ENCODE measurements at regions of chr3 and their contacts with region 1.

Region 1: DNA sequence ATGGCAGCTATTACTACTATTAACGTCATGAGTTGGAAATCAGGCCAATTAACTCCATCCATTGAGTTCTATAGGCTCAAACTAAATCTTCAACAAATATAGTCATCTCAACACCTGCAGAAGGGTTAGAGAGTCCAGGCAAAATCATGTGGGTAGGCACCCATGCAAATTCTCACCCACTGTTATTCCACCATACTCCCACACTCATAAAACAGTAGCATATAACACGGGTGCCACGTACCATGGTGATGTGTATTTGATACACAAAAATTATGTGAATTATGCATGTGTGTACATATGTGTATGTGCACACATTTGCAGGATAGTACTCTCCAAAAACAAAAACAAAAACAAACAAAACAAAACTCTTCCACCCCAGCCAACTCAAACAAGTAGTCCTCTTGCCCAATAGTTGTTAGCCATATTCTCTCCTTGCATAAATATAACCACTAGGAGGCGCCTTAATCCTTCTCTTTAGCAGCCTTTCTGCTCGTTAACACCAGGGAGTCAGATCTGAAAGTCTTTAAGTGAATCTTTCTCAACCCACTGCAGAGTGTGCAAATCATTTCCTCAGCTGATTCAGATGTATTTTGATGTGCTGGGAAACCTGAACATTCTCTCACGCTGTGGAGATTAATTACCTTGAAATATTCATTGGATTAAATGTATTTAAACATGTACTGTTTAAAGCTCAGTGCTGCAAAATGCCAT is 38.0 kb upstream of the COPB2 start:
- H3K4me3 Mint-ChIP-seq: no peak overlapping the region
- H3K27ac Mint-ChIP-seq: no peak overlapping the region
- H3K4me1 Mint-ChIP-seq: peaks cover 13% of the 10 kb centered on the region
- H3K27me3 Mint-ChIP-seq: no peaks in the 10 kb centered on the region

Region 2: GRCh38 chr3:139519998-139520737 is 92.7 kb after region 1 on chr3:
- intact Hi-C with region 1: loop called (anchors 2 kb)
- H3K4me3 Mint-ChIP-seq: no peak overlapping the region
- H3K27ac Mint-ChIP-seq: peak overlapping the region; percentile 81
- H3K4me1 Mint-ChIP-seq: peaks cover 27% of the 10 kb centered on the region
- H3K27me3 Mint-ChIP-seq: peaks cover 1% of the 10 kb centered on the region

Region 3: GRCh38 chr3:139561959-139562676 is 134.7 kb after region 1 on chr3:
- intact Hi-C with region 1: loop called (anchors 2 kb)
- H3K4me3 Mint-ChIP-seq: no peak overlapping the region
- H3K27ac Mint-ChIP-seq: no peak overlapping the region
- H3K4me1 Mint-ChIP-seq: peaks cover 11% of the 10 kb centered on the region
- H3K27me3 Mint-ChIP-seq: no peaks in the 10 kb centered on the region

Region 4: GRCh38 chr3:139629033-139629432 is 201.6 kb after region 1 on chr3:
- intact Hi-C with region 1: loop called (anchors 2 kb)
- H3K4me3 Mint-ChIP-seq: no peak overlapping the region
- H3K27ac Mint-ChIP-seq: no peak overlapping the region
- H3K4me1 Mint-ChIP-seq: peaks cover 7% of the 10 kb centered on the region
- H3K27me3 Mint-ChIP-seq: no peaks in the 10 kb centered on the region

Region 5: DNA sequence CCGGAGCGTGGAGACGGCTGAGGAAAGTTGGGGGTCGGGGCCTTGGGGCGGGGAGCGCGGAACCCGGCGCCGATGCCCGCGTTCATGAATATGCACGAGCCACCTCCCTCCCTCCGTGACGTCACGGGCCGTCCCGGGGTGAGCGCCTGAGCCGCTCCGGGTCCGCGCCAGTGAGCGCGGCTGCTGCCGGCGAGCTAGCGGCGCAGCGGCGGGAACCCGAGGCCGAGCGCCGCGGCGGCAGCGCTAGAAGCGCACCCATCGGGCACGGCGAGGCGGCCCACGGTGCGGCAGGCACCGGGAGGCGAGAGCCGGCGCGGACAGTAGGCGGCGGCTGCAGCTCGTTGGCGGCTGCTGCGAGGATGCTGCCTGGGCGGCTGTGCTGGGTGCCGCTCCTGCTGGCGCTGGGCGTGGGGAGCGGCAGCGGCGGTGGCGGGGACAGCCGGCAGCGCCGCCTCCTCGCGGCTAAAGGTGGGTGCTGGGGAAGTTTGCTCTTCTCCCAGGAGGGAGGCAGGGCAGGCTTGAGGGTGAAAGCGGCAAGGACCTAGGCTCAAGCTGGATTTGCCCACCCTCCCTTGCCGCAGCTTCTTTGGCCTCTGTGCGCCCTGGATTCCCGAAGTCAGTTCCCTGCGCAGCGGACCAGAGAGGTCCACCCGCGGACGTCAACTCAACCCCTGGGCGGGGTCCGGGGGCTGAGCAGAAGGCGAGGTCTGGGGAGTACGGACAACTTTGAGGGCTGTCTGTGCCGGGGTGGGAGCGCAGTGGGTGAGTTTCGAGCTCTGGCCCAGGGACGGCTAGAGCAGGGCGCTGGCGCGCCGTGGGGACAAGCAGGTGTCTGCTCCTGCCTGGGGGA is 507.8 kb after region 1 on chr3 and contains the start of gene CLSTN2:
- intact Hi-C with region 1: loop called (anchors 5 kb)
- H3K4me3 Mint-ChIP-seq: peak within 1 kb of the TSS; percentile 61
- H3K27ac Mint-ChIP-seq: no peak within 1 kb of the TSS
- H3K4me1 Mint-ChIP-seq: peaks cover 18% of the 10 kb centered on the region
- H3K27me3 Mint-ChIP-seq: peaks cover 64% of the 10 kb centered on the region

Region 6: GRCh38 chr3:140736863-140737460 is 1309.5 kb after region 1 on chr3:
- intact Hi-C with region 1: loop called (anchors 10 kb)
- H3K4me3 Mint-ChIP-seq: no peak overlapping the region
- H3K27ac Mint-ChIP-seq: no peak overlapping the region
- H3K4me1 Mint-ChIP-seq: peaks cover 2% of the 10 kb centered on the region
- H3K27me3 Mint-ChIP-seq: peaks cover 21% of the 10 kb centered on the region

Region 7: DNA sequence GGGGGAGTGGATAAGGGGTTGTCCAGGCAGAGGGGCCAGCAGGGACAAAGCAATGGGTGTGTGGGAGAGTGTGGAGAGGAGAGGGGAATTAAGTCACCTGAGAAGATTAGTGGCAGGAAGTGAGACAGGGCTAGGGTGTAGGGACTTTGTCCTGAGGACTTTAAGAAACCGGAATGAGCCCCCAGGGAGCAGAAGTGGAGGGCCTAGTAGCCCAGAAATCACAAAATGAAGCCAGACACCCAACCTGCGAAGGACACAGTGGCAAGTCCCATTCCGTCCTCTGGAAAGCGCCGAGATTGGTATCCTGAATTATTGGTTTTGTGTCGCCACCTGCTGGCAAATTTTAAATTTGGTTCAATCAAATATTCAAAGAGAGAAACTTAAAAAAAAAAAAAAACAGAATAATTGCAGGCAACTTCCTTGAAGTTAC is 1436.2 kb after region 1 on chr3:
- intact Hi-C with region 1: loop called (anchors 5 kb)
- H3K4me3 Mint-ChIP-seq: no peak overlapping the region
- H3K27ac Mint-ChIP-seq: no peak overlapping the region
- H3K4me1 Mint-ChIP-seq: peaks cover 6% of the 10 kb centered on the region
- H3K27me3 Mint-ChIP-seq: peaks cover 8% of the 10 kb centered on the region